ENCODE measurements at regions of chr3 and their contacts with region 1.

Region 1: GRCh38 chr3:108406661-108407206 is 103.7 kb downstream of the MYH15 start:
- DNase-seq: peak; percentile 70
- H3K4me3 ChIP-seq: no peak overlapping the region
- H3K27ac ChIP-seq: no peak overlapping the region
- H3K4me1 ChIP-seq: peaks cover 15 to 18% of the 10 kb centered on the region in 2 experiments
- H3K27me3 ChIP-seq: no peaks in the 10 kb centered on the region
- CTCF ChIP-seq: peak; percentile 83
- EP300 ChIP-seq: no peak
- RAD21 ChIP-seq: peak; percentile 93

Region 2: GRCh38 chr3:107938143-107938542 is 468.6 kb before region 1 on chr3:
- CTCF ChIA-PET with region 1: interaction called, 11 read pairs
- POLR2A ChIA-PET with region 1: no interaction called
- DNase-seq: peak; percentile 19
- H3K4me3 ChIP-seq: no peak overlapping the region
- H3K27ac ChIP-seq: no peak overlapping the region
- H3K4me1 ChIP-seq: no peaks in the 10 kb centered on the region
- H3K27me3 ChIP-seq: no peaks in the 10 kb centered on the region
- CTCF ChIP-seq: peak; percentile 66
- EP300 ChIP-seq: no peak
- RAD21 ChIP-seq: peak; percentile 84

Region 3: GRCh38 chr3:108153451-108153981 is 253.2 kb before region 1 on chr3:
- CTCF ChIA-PET with region 1: interaction called, 11 read pairs
- POLR2A ChIA-PET with region 1: no interaction called
- DNase-seq: peak; percentile 17
- H3K4me3 ChIP-seq: no peak overlapping the region; a peak in 1 of 4 replicates
- H3K27ac ChIP-seq: no peak overlapping the region
- H3K4me1 ChIP-seq: peaks cover 0 to 5% of the 10 kb centered on the region in 2 experiments; a peak in 1 of 4 replicates
- H3K27me3 ChIP-seq: no peaks in the 10 kb centered on the region
- CTCF ChIP-seq: peak; percentile 54
- EP300 ChIP-seq: no peak
- RAD21 ChIP-seq: peak; percentile 74

Measured in SK-N-SH (cell line).